ENCODE measurements at regions of chr14 and their contacts with region 1.

Region 1: DNA sequence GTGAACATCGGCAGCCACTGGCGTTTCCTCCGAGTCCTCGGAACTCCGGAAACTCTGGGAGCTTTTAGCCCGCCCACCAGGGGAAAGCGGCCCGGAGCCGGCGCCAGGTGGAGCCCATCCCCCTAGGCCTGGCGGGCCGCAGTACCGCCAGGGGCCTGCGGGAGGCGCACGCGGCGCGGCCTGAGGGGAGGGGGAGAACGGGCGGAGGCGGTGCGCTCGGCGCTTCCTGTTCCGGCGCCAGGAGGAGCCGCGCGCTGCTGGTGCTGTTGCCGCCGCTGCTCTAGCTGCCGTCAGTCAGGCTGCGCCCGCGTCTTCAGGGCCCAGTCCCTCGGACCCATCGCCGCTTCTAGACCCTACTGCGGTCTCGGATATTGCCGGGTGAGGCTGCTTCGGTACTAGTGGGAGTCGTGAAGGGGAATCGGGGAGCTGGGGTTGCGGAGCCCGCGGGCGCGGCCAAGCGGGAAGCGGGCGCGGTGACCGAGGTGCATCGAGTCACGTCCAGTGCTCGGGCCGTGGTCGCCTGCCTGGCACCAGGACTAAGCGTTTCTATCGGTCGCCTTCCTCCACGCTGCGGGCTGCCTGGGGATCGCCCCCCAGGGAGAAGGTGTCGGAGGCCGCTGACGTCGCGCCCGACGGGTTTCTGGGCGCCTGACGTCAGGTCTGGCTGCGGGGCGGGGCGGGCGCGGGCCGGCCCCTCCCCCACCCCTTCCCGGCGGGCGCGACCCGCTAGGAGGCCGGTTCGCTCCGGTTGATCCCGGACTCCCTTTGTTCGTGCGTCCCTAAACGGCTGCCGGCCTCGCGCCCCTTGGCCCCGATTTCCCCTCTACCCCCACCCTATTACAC is at the start of gene MAPK1IP1L:
- DNase-seq: peak; percentile 88
- H3K4me3 Mint-ChIP-seq: peak within 1 kb of the TSS; percentile 86
- H3K27ac Mint-ChIP-seq: peak within 1 kb of the TSS; percentile 91
- H3K4me1 Mint-ChIP-seq: peaks cover 40% of the 10 kb centered on the region
- H3K27me3 Mint-ChIP-seq: no peaks in the 10 kb centered on the region
- total RNA-seq, gene MAPK1IP1L: 94.3 to 118 TPM

Region 2: DNA sequence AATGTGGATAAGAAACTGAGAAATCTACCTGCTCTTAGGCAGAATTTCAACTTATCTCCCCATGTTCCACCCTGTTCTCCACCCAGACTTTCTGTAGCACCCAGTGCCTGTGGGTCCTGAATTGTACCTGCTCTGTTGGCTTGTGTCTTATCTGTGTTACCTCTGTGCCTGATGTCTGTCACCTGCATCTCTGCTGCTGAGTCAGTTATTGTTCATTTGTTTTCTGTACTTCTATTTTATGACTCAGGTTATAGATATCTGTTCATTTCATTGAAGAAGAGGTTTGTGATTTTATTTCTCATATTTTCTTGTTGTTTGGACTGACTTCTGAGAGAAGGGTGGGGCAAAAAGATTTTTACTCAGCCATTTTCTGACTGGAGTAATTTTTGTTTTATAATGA is 12.9 kb before region 1 on chr14:
- CTCF ChIA-PET with region 1: interaction called, 18 read pairs
- POLR2A ChIA-PET with region 1: interaction called, 3 read pairs
- DNase-seq: no peak
- H3K4me3 Mint-ChIP-seq: no peak overlapping the region
- H3K27ac Mint-ChIP-seq: no peak overlapping the region
- H3K4me1 Mint-ChIP-seq: peaks cover 2% of the 10 kb centered on the region
- H3K27me3 Mint-ChIP-seq: no peaks in the 10 kb centered on the region

Region 3: DNA sequence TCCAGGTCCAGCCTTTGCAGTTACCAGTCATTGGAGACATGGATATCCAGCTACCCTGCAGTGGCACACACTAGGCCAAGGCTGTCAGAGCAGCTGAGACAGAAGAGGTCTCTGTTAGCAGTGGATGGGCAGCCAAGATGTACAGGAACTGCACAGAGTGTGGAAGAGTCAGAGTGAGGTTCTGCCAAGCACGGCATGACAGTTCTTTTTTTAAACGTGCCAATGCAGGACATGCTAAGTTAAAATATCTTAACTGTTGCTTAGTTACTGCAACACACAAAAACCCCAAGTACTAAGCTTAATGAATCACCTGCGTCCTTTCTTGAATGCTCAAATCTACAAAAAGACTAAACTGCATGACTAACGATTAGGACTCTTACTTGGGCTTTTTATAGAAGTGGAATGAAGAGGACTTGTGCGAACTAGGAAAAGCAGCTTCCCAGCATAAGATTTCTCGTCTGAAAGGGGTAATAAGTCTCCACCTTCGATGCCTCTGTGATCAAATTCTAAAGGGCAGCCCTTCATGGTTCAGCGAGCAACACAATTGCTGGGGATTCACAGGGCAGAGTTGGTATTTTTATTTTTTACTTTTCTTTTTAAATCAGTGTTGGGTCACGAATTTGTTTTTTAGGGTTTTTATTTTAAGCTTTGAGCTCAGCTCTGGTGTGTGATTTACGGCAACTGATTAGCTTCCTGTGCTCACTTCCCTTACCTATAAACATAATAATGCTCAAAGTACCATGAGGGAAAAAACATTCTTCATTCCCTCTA is 20.4 kb after region 1 on chr14:
- CTCF ChIA-PET with region 1: interaction called, 15 read pairs
- POLR2A ChIA-PET with region 1: no interaction called
- DNase-seq: peak; percentile 7
- H3K4me3 Mint-ChIP-seq: no peak overlapping the region
- H3K27ac Mint-ChIP-seq: peak overlapping the region; percentile 59
- H3K4me1 Mint-ChIP-seq: peaks cover 34% of the 10 kb centered on the region
- H3K27me3 Mint-ChIP-seq: no peaks in the 10 kb centered on the region

Region 4: GRCh38 chr14:55094321-55095157 is 42.9 kb after region 1 on chr14:
- CTCF ChIA-PET with region 1: interaction called, 12 read pairs
- POLR2A ChIA-PET with region 1: no interaction called
- DNase-seq: no peak
- H3K4me3 Mint-ChIP-seq: no peak overlapping the region
- H3K27ac Mint-ChIP-seq: no peak overlapping the region
- H3K4me1 Mint-ChIP-seq: peaks cover 44% of the 10 kb centered on the region
- H3K27me3 Mint-ChIP-seq: peaks cover under 1% of the 10 kb centered on the region

Region 5: GRCh38 chr14:55152052-55152753 is 100.6 kb after region 1 on chr14:
- CTCF ChIA-PET with region 1: interaction called, 11 read pairs
- POLR2A ChIA-PET with region 1: no interaction called
- DNase-seq: no peak
- H3K4me3 Mint-ChIP-seq: no peak overlapping the region
- H3K27ac Mint-ChIP-seq: no peak overlapping the region
- H3K4me1 Mint-ChIP-seq: peaks cover 5% of the 10 kb centered on the region
- H3K27me3 Mint-ChIP-seq: no peaks in the 10 kb centered on the region